ENCODE measurements at regions of chr12 and their contacts with region 1.

Region 1: GRCh38 chr12:101773650-101774162 is 34.4 kb upstream of the SYCP3 start:
- DNase-seq: peak; percentile 54
- ATAC-seq: peak; percentile 81
- H3K4me3 Mint-ChIP-seq: no peak overlapping the region
- H3K27ac Mint-ChIP-seq: no peak overlapping the region
- H3K4me1 Mint-ChIP-seq: peaks cover 29% of the 10 kb centered on the region
- H3K27me3 Mint-ChIP-seq: no peaks in the 10 kb centered on the region

Region 2: GRCh38 chr12:101707131-101707782 is 66.4 kb before region 1 on chr12:
- POLR2A ChIA-PET with region 1: no interaction called
- DNase-seq: no peak
- ATAC-seq: no peak
- H3K4me3 Mint-ChIP-seq: no peak overlapping the region
- H3K27ac Mint-ChIP-seq: no peak overlapping the region
- H3K4me1 Mint-ChIP-seq: peaks cover 13% of the 10 kb centered on the region
- H3K27me3 Mint-ChIP-seq: no peaks in the 10 kb centered on the region

Region 3: DNA sequence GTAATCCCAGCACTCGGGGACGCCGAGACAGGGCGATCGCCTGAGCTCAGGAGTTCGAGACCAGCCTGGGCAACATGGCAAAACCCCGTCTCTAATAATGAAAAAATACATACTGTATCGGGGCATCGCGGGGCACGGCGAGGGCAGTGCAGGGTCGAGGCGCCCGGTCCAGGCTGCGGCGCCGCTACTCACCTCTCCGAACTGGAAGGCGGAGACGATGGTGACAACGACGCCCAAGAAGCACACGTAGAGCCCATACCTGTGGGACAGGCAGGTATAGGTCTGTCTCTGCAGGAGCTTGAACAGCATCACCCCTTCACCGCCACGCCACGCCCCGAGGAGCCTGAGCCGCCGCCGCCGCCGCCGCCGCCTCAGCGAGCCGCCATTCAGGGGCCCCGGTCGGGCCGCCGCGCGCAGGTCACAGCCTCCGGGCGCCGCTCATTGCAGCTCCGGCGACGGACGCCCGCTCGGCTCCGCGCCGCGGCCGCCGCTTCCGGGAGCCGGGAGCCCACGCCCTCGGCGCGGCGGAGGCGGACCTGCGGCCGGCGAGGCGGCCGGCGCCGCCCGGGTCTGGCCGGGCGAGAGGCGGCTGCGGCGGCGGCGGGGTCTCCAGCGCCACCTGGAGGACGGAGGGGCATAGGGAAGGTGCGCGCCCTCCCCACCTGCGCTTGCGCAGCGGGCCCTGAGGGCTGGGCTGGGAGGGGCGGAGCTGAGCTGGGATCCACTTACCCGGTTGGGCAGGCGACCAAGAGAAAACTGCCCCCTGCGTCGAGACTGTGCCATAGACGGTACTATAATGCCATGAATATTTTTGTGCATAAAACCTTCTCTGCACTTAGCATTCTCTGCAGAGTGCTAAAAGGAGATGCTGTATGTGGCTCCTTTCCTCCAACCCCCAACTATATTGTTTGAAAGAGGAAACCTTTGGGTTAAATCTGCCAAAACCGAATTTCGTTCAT is 56.9 kb after region 1 on chr12 and contains the start of gene GNPTAB:
- POLR2A ChIA-PET with region 1: interaction called, 11 read pairs
- DNase-seq: peak; percentile 97
- ATAC-seq: peak; percentile 95
- H3K4me3 Mint-ChIP-seq: peak within 1 kb of the TSS; percentile 100
- H3K27ac Mint-ChIP-seq: peak within 1 kb of the TSS; percentile 97
- H3K4me1 Mint-ChIP-seq: peaks cover 38% of the 10 kb centered on the region
- H3K27me3 Mint-ChIP-seq: no peaks in the 10 kb centered on the region
- total RNA-seq, gene GNPTAB: 89.5 to 91.1 TPM